Tibial artery (tissue), 4 donors: ENCODE measurements at regions of chr4 and their contacts with region 1.

Region 1: DNA sequence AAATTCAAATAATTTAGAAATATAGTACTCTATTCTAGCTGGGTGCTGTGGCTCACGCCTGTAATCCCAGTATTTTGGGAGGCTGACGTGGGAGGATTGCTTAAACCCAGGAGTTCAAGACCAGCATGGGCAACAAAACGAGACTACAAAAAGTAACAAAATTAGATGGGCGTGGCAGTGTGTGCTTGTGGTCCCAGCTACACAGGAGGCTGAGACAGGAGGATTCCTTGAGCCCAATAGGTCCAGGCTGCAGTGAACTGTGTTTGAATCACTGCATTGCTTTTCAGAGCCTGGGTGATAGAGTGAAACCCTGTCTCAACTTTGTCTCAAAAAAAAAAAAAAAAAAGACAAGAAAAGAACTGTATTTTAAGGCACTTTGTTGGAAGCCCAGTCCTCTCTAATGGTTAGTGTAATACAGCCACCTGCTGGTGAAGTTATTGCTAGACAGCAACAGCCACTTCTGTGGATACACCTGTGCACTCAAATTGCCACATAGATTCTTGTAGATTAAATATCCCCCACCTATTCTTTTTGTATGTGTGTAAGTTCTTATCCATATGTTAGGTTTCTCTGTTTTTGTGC is 10.1 kb upstream of the FGG start:
- DNase-seq: no peak
- H3K4me3 ChIP-seq: no peak overlapping the region
- H3K27ac ChIP-seq: no peak overlapping the region
- H3K4me1 ChIP-seq: peaks cover 0 to 11% (median 9%) of the 10 kb centered on the region in 4 donors
- H3K27me3 ChIP-seq: no peaks in the 10 kb centered on the region
- CTCF ChIP-seq: peak; percentile 18 to 44

Region 2: DNA sequence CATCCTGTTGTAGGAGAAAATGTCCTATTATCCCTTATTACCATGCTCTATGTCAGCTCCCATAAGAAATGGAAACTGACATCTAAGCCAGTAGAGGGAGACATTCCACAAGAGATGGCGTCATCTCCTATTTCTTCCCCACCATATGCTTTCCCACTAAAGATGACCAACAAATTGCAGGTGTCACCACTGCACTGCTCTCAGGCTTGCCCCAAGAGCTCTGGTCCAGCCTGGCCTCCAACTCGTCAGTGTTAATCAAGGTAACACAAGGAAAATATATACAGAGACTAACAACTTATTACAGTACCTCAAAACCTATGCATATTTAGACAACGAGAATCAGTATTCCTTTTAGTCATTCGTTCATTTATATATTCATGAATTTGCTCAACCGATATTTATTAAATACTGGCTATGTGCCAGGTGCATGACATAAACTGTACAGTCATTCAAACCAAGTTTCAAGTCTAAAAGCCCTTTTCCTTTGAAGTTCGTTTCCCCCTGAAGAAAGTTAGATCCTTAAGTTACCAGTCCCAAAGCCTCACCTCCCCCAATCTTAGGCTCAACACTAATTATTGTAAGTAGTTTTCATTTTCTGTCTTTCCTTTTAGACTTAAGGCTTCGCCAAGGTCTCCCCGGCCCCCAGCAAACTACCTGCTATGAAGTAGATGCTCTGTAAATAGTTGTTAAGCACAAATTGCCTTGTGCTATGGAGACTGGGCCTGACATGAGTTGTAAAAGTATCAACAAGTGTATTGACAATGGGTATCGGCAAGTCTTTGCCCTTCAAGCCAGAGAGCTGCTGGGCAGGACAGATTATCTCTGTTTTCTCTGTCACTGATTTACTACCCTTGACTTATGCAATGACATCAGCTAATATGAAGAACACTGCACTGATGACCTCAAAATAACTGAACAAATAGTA is 62.8 kb before region 1 on chr4:
- intact Hi-C with region 1: loop called (anchors 5 kb)
- DNase-seq: no peak
- H3K4me3 ChIP-seq: no peak overlapping the region
- H3K27ac ChIP-seq: no peak overlapping the region
- H3K4me1 ChIP-seq: no peaks in the 10 kb centered on the region
- H3K27me3 ChIP-seq: no peaks in the 10 kb centered on the region
- CTCF ChIP-seq: no peak

Region 3: GRCh38 chr4:154677923-154678322 is 55.4 kb after region 1 on chr4:
- intact Hi-C with region 1: no loop called
- DNase-seq: no peak
- H3K4me3 ChIP-seq: no peak overlapping the region
- H3K27ac ChIP-seq: no peak overlapping the region
- H3K4me1 ChIP-seq: no peaks in the 10 kb centered on the region
- H3K27me3 ChIP-seq: no peaks in the 10 kb centered on the region
- CTCF ChIP-seq: no peak